ENCODE measurements at regions of chr11 and their contacts with region 1.

Region 1: DNA sequence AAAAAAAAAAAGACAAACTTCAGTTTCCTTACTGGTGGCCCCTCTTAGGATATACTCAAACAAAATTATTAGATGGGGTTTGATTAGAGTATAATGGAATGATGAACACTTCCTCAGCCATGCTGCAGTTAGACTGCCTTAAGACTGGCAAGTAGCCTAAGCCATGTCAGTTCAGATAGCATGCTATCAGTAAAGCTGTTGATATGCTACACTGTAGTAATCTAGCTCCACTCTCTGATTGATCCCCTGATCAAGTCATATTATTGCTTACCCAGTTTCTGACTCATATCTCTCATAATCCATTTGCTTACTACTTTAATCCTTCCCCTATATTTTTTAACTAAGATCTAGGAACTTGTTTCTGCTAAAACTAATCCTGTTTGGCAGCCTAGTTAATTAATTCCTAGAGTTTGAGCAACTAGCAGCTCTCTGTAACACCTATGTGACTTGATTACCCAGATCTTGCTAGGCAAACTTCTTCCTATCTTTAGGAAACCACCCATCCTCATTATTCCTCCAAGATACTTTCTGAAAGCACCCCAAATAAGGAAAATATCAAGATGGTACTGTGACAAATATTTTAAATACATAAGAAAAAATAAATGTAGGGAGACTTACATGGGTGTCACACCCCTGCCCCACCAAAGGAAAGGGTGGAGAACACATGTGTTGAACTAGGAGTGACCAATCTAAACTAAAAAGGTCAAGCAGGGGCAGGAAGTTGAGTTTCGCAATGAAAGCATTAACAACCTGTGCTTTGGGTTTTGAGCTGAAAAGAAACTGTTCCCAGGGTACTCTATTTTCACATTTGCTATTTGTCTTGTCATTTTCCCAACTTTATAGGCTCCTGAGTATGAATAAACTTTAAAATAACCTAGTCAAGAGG is 43.2 kb downstream of the PIK3C2A start:
- H3K4me3 Mint-ChIP-seq: no peak overlapping the region
- H3K27ac Mint-ChIP-seq: peak overlapping the region; percentile 61
- H3K4me1 Mint-ChIP-seq: peaks cover 43% of the 10 kb centered on the region
- H3K27me3 Mint-ChIP-seq: no peaks in the 10 kb centered on the region

Region 2: GRCh38 chr11:16382638-16383380 is 781.8 kb before region 1 on chr11:
- intact Hi-C with region 1: no loop called
- H3K4me3 Mint-ChIP-seq: no peak overlapping the region
- H3K27ac Mint-ChIP-seq: no peak overlapping the region
- H3K4me1 Mint-ChIP-seq: no peaks in the 10 kb centered on the region
- H3K27me3 Mint-ChIP-seq: no peaks in the 10 kb centered on the region

Region 3: GRCh38 chr11:17207317-17208258 is 43.0 kb after region 1 on chr11 and contains the start of gene PIK3C2A:
- intact Hi-C with region 1: loop called (anchors 5 kb)
- H3K4me3 Mint-ChIP-seq: peak within 1 kb of the TSS; percentile 88
- H3K27ac Mint-ChIP-seq: peak within 1 kb of the TSS; percentile 93
- H3K4me1 Mint-ChIP-seq: peaks cover 63% of the 10 kb centered on the region
- H3K27me3 Mint-ChIP-seq: no peaks in the 10 kb centered on the region

Region 4: GRCh38 chr11:17371614-17372013 is 207.0 kb after region 1 on chr11:
- intact Hi-C with region 1: no loop called
- H3K4me3 Mint-ChIP-seq: no peak overlapping the region
- H3K27ac Mint-ChIP-seq: no peak overlapping the region
- H3K4me1 Mint-ChIP-seq: no peaks in the 10 kb centered on the region
- H3K27me3 Mint-ChIP-seq: no peaks in the 10 kb centered on the region